WTC11 (cell line): ENCODE measurements at regions of chr22 and their contacts with region 1.

Region 1: GRCh38 chr22:40679964-40680818 is 907 bp downstream of the MCHR1 start:
- DNase-seq: no peak
- ATAC-seq: no peak
- H3K4me3 Mint-ChIP-seq: peak overlapping the region; percentile 34; the same call in 1 of the 2 replicates
- H3K27ac Mint-ChIP-seq: peak overlapping the region; percentile 57; the same call in 1 of the 2 replicates
- H3K4me1 Mint-ChIP-seq: peaks cover 64% of the 10 kb centered on the region
- H3K27me3 Mint-ChIP-seq: no peaks in the 10 kb centered on the region
- CTCF ChIP-seq: no peak

Region 2: DNA sequence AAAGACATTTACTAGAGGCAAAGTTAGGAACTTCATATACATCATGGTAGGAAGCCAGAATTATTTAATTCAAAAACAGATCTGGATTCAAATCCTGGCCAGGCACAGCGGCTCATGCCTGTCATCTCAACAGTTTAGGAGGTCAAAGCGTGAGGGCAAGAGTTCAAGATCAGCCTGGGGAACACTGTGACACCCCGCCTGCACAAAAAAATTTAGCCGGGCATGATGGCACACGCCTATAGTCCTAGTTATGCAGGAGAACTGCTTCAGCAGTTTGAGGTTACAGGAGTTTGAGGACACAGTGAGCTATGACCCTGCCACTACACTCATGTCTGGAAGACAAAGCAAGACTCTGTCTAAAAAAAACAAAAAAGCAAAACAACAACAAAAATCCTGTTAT is 52.6 kb before region 1 on chr22:
- CTCF ChIA-PET with region 1: no interaction called
- POLR2A ChIA-PET with region 1: no interaction called
- DNase-seq: no peak
- ATAC-seq: no peak
- H3K4me3 Mint-ChIP-seq: no peak overlapping the region
- H3K27ac Mint-ChIP-seq: peak overlapping the region; percentile 60
- H3K4me1 Mint-ChIP-seq: peaks cover 19% of the 10 kb centered on the region
- H3K27me3 Mint-ChIP-seq: no peaks in the 10 kb centered on the region
- CTCF ChIP-seq: no peak

Region 3: DNA sequence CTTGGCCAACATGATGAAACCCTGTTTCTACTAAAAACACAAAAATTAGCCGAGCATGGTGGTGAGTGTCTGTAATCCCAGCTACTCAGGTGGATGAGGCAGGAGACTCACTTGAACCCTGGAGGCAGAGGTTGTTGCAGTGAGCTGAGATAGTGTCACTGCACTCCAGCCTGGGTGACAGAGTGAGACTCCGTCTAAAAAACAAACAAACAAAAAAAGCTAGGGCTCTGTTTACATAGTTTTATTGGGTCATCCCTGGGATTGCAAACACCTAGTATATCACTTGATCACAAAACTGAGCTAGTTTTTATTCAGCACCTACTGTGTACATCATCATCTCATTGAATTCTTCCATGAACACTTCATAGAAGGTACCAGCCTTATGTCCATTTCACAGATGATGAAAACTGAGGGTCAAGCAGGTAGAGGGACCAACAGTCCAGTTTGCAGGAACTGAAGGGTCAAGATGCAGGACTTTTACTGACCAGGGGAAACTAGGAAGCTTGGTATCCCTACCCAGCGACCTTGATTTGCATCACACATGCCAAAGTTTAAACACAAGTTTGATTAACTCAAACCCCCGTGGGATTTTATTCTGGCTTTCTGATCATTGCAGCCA is 34.5 kb before region 1 on chr22:
- CTCF ChIA-PET with region 1: interaction called, 15 read pairs
- POLR2A ChIA-PET with region 1: no interaction called
- DNase-seq: no peak
- ATAC-seq: no peak
- H3K4me3 Mint-ChIP-seq: no peak overlapping the region
- H3K27ac Mint-ChIP-seq: no peak overlapping the region
- H3K4me1 Mint-ChIP-seq: peaks cover 5% of the 10 kb centered on the region
- H3K27me3 Mint-ChIP-seq: no peaks in the 10 kb centered on the region
- CTCF ChIP-seq: no peak

Region 4: GRCh38 chr22:40714192-40714951 is 34.2 kb after region 1 on chr22:
- CTCF ChIA-PET with region 1: interaction called, 20 read pairs
- POLR2A ChIA-PET with region 1: interaction called, 7 read pairs
- DNase-seq: peak; percentile 59
- ATAC-seq: peak; percentile 75
- H3K4me3 Mint-ChIP-seq: peak overlapping the region; percentile 50
- H3K27ac Mint-ChIP-seq: peak overlapping the region; percentile 89
- H3K4me1 Mint-ChIP-seq: peaks cover 42% of the 10 kb centered on the region
- H3K27me3 Mint-ChIP-seq: peaks cover 18% of the 10 kb centered on the region
- CTCF ChIP-seq: no peak

Region 5: GRCh38 chr22:40757071-40757470 is 76.9 kb after region 1 on chr22:
- CTCF ChIA-PET with region 1: interaction called, 133 read pairs
- POLR2A ChIA-PET with region 1: interaction called, 3 read pairs
- DNase-seq: no peak
- ATAC-seq: no peak
- H3K4me3 Mint-ChIP-seq: no peak overlapping the region
- H3K27ac Mint-ChIP-seq: no peak overlapping the region
- H3K4me1 Mint-ChIP-seq: peaks cover 44% of the 10 kb centered on the region
- H3K27me3 Mint-ChIP-seq: no peaks in the 10 kb centered on the region; the same call in 1 of the 2 replicates
- CTCF ChIP-seq: no peak

Region 6: DNA sequence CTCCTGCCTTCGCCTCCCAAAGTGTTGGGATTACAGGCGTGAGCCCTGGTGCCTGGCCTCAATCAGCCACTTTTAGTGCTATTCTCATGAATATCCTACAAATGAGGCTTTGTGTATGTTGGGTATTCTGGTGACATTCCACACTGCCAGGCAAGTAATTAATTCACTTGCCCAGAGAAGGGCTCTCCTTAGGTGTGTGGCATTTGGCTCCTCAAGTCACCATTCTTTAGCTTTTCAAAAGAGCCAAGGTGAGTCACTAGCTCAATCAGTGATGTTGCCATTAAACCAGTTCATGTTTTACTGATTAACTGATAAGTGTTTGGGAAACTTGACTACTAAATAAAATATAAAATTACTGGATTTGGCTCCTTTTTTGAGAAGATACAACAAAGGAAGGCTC is 86.8 kb after region 1 on chr22:
- CTCF ChIA-PET with region 1: interaction called, 133 read pairs
- POLR2A ChIA-PET with region 1: interaction called, 3 read pairs
- DNase-seq: no peak
- ATAC-seq: no peak
- H3K4me3 Mint-ChIP-seq: no peak overlapping the region
- H3K27ac Mint-ChIP-seq: no peak overlapping the region
- H3K4me1 Mint-ChIP-seq: no peaks in the 10 kb centered on the region
- H3K27me3 Mint-ChIP-seq: no peaks in the 10 kb centered on the region
- CTCF ChIP-seq: no peak

Region 7: GRCh38 chr22:40782518-40782917 is 102.3 kb after region 1 on chr22:
- CTCF ChIA-PET with region 1: interaction called, 10 read pairs
- POLR2A ChIA-PET with region 1: no interaction called
- DNase-seq: no peak
- ATAC-seq: no peak
- H3K4me3 Mint-ChIP-seq: no peak overlapping the region
- H3K27ac Mint-ChIP-seq: peak overlapping the region; percentile 37; the same call in 1 of the 2 replicates
- H3K4me1 Mint-ChIP-seq: no peaks in the 10 kb centered on the region
- H3K27me3 Mint-ChIP-seq: no peaks in the 10 kb centered on the region
- CTCF ChIP-seq: no peak